Panc1 (cell line): ENCODE measurements at regions of chr6 and their contacts with region 1.

Region 1: GRCh38 chr6:128836761-128837160 is 46.2 kb upstream of the LAMA2 start:
- DNase-seq: no peak
- ATAC-seq: no peak
- H3K4me3 ChIP-seq: no peak overlapping the region
- H3K27ac ChIP-seq: no peak overlapping the region
- H3K4me1 ChIP-seq: no peaks in the 10 kb centered on the region
- H3K27me3 ChIP-seq: no peaks in the 10 kb centered on the region
- CTCF ChIP-seq: no peak

Region 2: GRCh38 chr6:129084406-129084805 is 247.6 kb after region 1 on chr6:
- CTCF ChIA-PET with region 1: no interaction called
- POLR2A ChIA-PET with region 1: interaction called, 13 read pairs
- in situ Hi-C with region 1: no loop called
- intact Hi-C with region 1: no loop called
- DNase-seq: no peak
- ATAC-seq: no peak
- H3K4me3 ChIP-seq: no peak overlapping the region
- H3K27ac ChIP-seq: no peak overlapping the region
- H3K4me1 ChIP-seq: no peaks in the 10 kb centered on the region
- H3K27me3 ChIP-seq: no peaks in the 10 kb centered on the region
- CTCF ChIP-seq: no peak